ENCODE measurements at regions of chr1 and their contacts with region 1.

Region 1: GRCh38 chr1:90114521-90115141 is 119.7 kb downstream of the ZNF326 start:
- DNase-seq: peak in 1 of 2 experiments; percentile 39
- H3K4me3 ChIP-seq: no peak overlapping the region
- H3K4me3 Mint-ChIP-seq: no peak overlapping the region
- H3K27ac Mint-ChIP-seq: no peak overlapping the region
- H3K4me1 ChIP-seq: no peaks in the 10 kb centered on the region
- H3K4me1 Mint-ChIP-seq: no peaks in the 10 kb centered on the region
- H3K27me3 ChIP-seq: no peaks in the 10 kb centered on the region
- H3K27me3 Mint-ChIP-seq: peaks cover 6% of the 10 kb centered on the region
- CTCF ChIP-seq: peak; percentile 47 to 52

Region 2: DNA sequence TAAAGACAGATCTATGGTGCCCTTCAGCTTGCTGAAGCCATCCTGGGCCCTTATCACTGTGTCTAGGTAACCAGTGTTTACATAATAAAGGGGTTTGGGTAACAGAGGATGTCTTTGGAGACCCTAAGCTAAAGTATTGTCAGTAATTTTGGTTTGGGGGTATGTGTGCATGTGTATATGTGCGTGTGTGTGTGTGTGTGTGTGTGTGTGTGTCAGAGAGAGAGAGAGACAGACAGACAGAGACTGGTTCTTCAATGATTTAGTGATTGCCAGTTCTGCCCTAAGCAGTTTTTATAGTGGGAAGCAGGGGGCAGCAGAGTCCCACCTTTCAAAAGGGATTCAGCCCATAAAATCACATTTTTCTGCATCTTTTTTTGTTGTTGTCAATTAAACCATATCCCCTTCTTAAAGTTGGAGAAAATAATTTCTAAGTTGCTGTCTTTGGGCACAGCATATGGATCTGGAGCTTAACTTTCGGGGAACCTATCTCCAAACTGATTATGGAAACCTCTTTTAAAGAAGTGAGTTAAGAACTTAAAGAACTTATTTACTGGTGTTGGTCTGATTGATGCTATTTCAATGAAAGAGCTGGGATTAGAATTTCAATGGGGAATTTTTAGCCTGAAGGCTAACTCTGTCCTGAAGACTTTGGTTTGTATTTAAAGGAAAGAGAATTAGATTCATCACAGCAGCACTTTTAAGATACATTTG is 68.6 kb before region 1 on chr1:
- CTCF ChIA-PET with region 1: no interaction called
- POLR2A ChIA-PET with region 1: no interaction called
- intact Hi-C with region 1: loop called (anchors 1 kb)
- DNase-seq: peak in 1 of 2 experiments; percentile 37
- H3K4me3 ChIP-seq: no peak overlapping the region
- H3K4me3 Mint-ChIP-seq: no peak overlapping the region
- H3K27ac Mint-ChIP-seq: no peak overlapping the region
- H3K4me1 ChIP-seq: peaks cover 12% of the 10 kb centered on the region
- H3K4me1 Mint-ChIP-seq: peaks cover 22% of the 10 kb centered on the region
- H3K27me3 ChIP-seq: no peaks in the 10 kb centered on the region
- H3K27me3 Mint-ChIP-seq: no peaks in the 10 kb centered on the region
- CTCF ChIP-seq: peak; percentile 61 to 64

Region 3: GRCh38 chr1:90291431-90292216 is 177.0 kb after region 1 on chr1:
- CTCF ChIA-PET with region 1: no interaction called
- POLR2A ChIA-PET with region 1: no interaction called
- intact Hi-C with region 1: loop called (anchors 5 kb)
- DNase-seq: no peak
- H3K4me3 ChIP-seq: no peak overlapping the region
- H3K4me3 Mint-ChIP-seq: no peak overlapping the region
- H3K27ac Mint-ChIP-seq: no peak overlapping the region
- H3K4me1 ChIP-seq: no peaks in the 10 kb centered on the region
- H3K4me1 Mint-ChIP-seq: no peaks in the 10 kb centered on the region
- H3K27me3 ChIP-seq: no peaks in the 10 kb centered on the region
- H3K27me3 Mint-ChIP-seq: peaks cover 13% of the 10 kb centered on the region
- CTCF ChIP-seq: no peak

Region 4: DNA sequence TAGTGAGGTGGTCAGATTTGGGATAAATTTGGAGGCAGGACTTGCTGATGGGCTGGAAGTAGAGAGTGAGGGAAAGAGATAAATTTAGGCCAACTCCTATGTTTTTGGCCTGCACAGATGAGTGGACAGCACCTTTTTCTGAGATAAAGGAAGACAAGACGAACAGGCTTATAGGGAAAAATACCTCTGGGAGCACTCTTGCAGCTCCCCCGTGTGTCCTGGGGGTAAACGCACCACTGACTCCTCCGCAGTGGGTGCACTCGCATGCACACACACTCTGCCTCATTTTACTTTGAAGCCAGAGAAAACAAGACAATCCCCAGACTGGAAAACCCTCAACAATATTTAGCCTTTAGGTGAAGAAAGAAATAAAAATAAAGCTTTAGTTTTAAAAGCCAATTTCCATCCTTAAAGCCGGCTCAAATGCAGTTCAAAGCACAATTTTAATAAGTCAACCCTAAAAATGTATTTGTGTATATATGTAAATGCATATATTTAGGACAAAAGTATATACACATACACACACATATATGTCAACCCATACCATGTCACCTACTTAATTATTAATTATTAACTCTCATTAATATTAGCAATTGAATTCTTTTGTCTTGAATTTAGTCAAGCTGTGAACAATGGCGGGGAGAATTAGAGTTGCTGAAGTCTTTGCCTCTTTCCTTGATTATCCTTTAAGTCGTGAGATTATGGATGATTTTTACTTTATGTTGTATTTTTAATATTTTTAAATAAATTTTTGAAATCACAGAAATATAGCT is 222.1 kb after region 1 on chr1:
- CTCF ChIA-PET with region 1: no interaction called
- POLR2A ChIA-PET with region 1: no interaction called
- intact Hi-C with region 1: loop called (anchors 2 kb)
- DNase-seq: peak in 1 of 2 experiments; percentile 1
- H3K4me3 ChIP-seq: no peak overlapping the region
- H3K4me3 Mint-ChIP-seq: no peak overlapping the region
- H3K27ac Mint-ChIP-seq: no peak overlapping the region
- H3K4me1 ChIP-seq: no peaks in the 10 kb centered on the region
- H3K4me1 Mint-ChIP-seq: no peaks in the 10 kb centered on the region
- H3K27me3 ChIP-seq: no peaks in the 10 kb centered on the region
- H3K27me3 Mint-ChIP-seq: peaks cover 2% of the 10 kb centered on the region
- CTCF ChIP-seq: no peak

Region 5: DNA sequence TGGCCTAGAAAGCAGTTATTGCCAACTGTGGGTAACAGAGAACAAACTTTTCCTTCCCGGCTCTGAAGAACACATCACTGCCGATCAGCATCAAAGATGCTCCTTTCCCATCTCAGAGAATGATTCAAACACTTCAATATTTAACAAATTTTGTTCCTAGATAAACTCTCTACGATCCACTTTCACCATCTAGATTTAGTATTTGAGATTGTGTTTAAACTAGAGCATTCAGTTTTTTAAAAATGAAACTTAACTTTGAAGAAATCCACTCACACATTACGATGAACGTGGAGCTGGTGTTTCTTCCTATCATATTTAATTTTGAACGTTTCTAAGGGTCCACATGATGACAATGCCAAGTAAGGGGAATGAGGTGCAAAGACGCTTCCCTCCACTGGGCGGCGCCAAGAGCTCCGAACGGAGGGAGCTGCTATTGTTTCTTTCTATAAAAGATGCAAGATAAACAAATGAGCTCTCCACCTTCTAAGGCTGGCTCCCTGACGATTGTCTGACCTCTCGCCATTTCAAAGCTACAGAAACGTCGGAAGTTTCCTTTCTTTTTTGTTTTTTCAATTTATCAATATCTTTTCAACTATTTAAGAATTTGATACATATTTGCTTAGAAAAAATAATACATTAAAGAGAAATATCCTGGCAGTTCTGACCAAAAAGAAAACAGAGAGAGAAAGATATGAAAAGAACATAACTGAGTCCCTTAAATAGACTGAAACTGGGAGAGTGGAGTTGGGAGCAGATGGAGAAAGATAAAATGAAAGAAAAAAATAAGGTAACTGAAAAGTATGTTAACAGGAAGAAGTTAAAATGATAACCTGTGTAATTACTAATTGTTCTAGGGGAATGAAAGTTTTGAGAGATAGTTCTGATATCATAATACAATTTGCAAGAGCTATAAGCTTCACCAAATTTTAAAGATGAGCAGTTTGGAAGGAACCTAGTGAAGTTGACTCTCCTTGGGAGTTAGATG is 606.9 kb after region 1 on chr1:
- CTCF ChIA-PET with region 1: no interaction called
- POLR2A ChIA-PET with region 1: no interaction called
- intact Hi-C with region 1: loop called (anchors 5 kb)
- DNase-seq: peak in 1 of 2 experiments; percentile 57
- H3K4me3 ChIP-seq: no peak overlapping the region
- H3K4me3 Mint-ChIP-seq: no peak overlapping the region
- H3K27ac Mint-ChIP-seq: no peak overlapping the region
- H3K4me1 ChIP-seq: no peaks in the 10 kb centered on the region
- H3K4me1 Mint-ChIP-seq: no peaks in the 10 kb centered on the region
- H3K27me3 ChIP-seq: no peaks in the 10 kb centered on the region
- H3K27me3 Mint-ChIP-seq: peaks cover 5% of the 10 kb centered on the region
- CTCF ChIP-seq: peak; percentile 55 to 68